GM12878 (cell line): ENCODE measurements at regions of chr6 and their contacts with region 1.

Region 1: DNA sequence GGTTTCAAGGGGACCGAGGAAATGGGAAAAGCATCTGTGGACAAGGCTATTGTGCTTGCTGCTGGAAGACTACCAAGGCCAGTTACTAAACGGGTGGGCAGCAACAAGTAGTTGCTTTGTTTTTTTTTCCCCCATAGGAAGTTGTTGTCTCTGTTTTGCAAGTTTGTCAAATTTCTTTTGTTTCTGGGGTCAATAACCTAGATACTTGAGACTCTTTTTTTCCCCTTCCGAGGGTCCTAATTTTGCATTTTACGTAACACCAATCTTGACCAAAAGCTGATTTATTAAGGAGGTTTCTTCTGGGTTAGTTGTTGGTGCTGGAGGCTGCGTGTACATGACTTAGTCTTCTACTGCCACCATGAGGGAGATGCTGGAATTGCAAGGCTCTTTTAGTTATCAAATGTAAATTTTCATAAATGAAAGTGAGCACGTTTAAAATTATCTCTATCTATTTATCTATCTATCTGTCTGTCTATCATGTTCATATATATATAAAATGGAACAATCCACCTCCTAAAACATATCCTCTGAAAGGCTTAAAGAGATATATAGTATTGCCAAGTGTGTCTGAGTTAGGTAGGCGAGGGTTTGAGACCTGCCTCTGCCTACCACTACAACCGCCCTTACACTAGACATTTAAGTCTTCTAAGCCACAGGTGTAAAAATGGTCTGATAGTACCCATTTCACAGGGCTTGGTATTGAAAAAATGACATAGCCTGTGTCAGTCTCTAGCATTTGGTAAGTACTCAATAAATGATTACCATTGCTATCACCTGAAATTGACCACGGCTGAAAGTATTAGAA is 60.2 kb downstream of the GCLC start:
- DNase-seq: no peak
- ATAC-seq: peak; percentile 65
- H3K4me3 ChIP-seq: no peak overlapping the region
- H3K27ac ChIP-seq: no peak overlapping the region
- H3K4me1 ChIP-seq: no peaks in the 10 kb centered on the region
- H3K27me3 ChIP-seq: no peaks in the 10 kb centered on the region
- CTCF ChIP-seq: peak; percentile 88 to 98 (median 96); a peak in 5 of 6 replicates
- EP300 ChIP-seq: no peak
- POLR2A ChIP-seq: no peak
- RAD21 ChIP-seq: peak; percentile 99

Region 2: DNA sequence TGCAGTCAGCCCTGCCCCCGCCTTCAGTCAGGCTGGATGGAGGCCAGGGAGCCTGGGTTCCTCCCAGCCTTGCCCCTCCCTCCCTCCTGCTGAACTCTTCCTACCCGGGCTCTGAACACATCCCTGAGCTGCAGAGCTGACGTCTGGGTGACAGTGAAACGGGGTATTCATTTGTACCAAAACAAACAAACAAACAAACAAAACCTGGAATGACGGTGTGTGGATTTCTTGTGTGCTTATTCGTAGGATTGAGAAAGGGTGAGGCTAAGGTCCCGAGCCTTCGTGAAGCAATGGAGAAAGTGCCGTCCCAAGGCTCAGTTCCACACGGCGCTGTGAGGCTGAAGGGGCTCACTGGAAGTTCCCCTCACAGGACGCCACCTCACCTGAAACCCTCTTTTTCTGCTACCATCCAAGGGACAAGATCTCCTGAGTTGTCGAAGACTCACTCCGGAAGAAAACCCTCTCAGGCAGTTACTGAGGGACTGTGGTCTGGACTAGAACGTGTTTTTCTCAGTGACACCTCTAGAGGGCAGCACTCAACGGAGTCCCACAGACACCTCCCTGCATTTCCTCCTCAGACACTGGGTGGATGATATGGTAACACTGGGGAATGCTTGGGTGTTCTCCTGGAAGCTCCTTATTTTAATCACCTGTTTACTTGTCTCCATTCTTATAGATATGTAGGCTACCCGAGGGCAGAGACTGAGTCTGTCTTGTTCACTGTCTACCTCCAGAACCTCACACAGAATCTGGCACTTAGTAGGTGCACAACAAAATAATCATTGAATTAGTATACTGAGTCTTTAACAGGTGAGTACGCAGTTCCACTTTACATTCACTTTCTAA is 602.5 kb before region 1 on chr6:
- CTCF ChIA-PET with region 1: no interaction called
- POLR2A ChIA-PET with region 1: no interaction called
- RAD21 ChIA-PET with region 1: no interaction called
- SMC1A ChIA-PET with region 1: no interaction called
- in situ Hi-C with region 1: no loop called
- intact Hi-C with region 1: loop called (anchors 10 kb)
- DNase-seq: peak; percentile 26
- ATAC-seq: peak; percentile 100
- H3K4me3 ChIP-seq: peak overlapping the region; percentile 43
- H3K27ac ChIP-seq: no peak overlapping the region
- H3K4me1 ChIP-seq: no peaks in the 10 kb centered on the region
- H3K27me3 ChIP-seq: no peaks in the 10 kb centered on the region; a peak in 1 of 4 replicates
- CTCF ChIP-seq: peak; percentile 77 to 79 (median 78)
- EP300 ChIP-seq: no peak
- POLR2A ChIP-seq: no peak
- RAD21 ChIP-seq: peak; percentile 60

Region 3: GRCh38 chr6:53151676-53152075 is 333.0 kb before region 1 on chr6:
- CTCF ChIA-PET with region 1: interaction called, 22 read pairs
- POLR2A ChIA-PET with region 1: no interaction called
- RAD21 ChIA-PET with region 1: interaction called, 12 read pairs
- SMC1A ChIA-PET with region 1: interaction called, 4 read pairs
- in situ Hi-C with region 1: no loop called
- intact Hi-C with region 1: loop called (anchors 1 kb)
- DNase-seq: no peak
- ATAC-seq: peak; percentile 96
- H3K4me3 ChIP-seq: no peak overlapping the region
- H3K27ac ChIP-seq: no peak overlapping the region
- H3K4me1 ChIP-seq: no peaks in the 10 kb centered on the region
- H3K27me3 ChIP-seq: peaks cover 0 to 2% of the 10 kb centered on the region in 2 experiments; a peak in 1 of 4 replicates
- CTCF ChIP-seq: peak; percentile 46 to 62 (median 48)
- EP300 ChIP-seq: no peak
- POLR2A ChIP-seq: no peak
- RAD21 ChIP-seq: 0 out of 2 replicates have a peak, but pooled peaks have one; percentile 35

Region 4: DNA sequence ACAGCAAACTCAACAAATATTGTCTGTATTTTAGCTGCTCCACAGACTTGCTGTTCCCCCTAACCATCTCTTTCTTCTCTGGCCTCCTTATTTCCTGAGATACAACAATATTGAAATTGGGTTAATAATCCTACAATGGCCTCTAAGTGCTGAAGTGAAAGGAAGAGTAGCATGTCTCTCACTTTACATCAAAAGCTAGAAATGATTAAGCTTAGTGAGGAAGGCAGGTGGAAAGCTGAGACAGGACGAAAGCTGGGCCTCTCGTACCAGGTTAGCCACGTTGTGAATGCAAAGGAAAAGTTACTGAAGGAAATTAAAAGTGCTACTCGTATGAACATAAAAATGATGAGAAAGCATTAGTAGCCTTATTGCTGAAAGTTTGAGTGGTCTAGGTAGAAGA is 199.8 kb before region 1 on chr6:
- CTCF ChIA-PET with region 1: interaction called, 10 read pairs
- POLR2A ChIA-PET with region 1: no interaction called
- RAD21 ChIA-PET with region 1: interaction called, 3 read pairs
- SMC1A ChIA-PET with region 1: interaction called, 10 read pairs
- in situ Hi-C with region 1: no loop called
- intact Hi-C with region 1: loop called (anchors 5 kb)
- DNase-seq: no peak
- ATAC-seq: peak; percentile 76
- H3K4me3 ChIP-seq: no peak overlapping the region
- H3K27ac ChIP-seq: no peak overlapping the region
- H3K4me1 ChIP-seq: peaks cover 28% of the 10 kb centered on the region
- H3K27me3 ChIP-seq: no peaks in the 10 kb centered on the region
- CTCF ChIP-seq: no peak
- EP300 ChIP-seq: peak in 1 of 2 experiments; percentile 33; a peak in 1 of 4 replicates
- POLR2A ChIP-seq: no peak
- RAD21 ChIP-seq: no peak

Region 5: DNA sequence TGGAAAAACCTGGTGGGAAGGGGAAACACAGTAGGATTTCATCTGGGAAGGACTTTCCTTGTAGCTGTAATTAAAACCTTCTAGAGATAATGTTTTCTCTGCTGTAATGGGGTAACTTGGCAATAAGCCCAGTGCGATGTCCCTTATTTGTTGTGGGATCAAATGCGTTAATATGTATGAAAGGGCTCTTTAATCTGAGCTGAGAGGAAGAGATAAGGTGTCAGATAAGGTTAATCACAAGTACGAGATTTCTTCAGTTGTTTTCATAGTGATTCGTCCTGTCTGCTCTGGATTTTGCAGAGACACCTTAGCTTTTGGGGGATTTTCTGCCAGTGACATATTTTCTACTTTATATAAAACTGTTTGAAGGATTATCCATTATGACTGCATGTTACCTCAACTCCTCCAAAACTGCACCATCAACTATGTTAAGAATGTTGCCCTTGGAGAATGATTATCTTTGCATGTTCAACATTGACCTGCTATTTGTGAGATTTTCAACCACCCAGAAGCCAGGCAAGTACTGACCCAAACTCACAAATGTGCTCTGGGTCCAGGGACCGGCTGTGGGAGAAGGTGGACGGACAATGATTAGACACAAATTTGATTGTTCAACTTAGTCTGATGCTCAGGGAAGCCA is 114.7 kb before region 1 on chr6:
- CTCF ChIA-PET with region 1: no interaction called
- POLR2A ChIA-PET with region 1: no interaction called
- RAD21 ChIA-PET with region 1: no interaction called
- SMC1A ChIA-PET with region 1: no interaction called
- in situ Hi-C with region 1: no loop called
- intact Hi-C with region 1: no loop called
- DNase-seq: no peak
- ATAC-seq: no peak
- H3K4me3 ChIP-seq: no peak overlapping the region
- H3K27ac ChIP-seq: no peak overlapping the region
- H3K4me1 ChIP-seq: no peaks in the 10 kb centered on the region
- H3K27me3 ChIP-seq: no peaks in the 10 kb centered on the region
- CTCF ChIP-seq: no peak
- EP300 ChIP-seq: no peak
- POLR2A ChIP-seq: no peak
- RAD21 ChIP-seq: no peak

Region 6: DNA sequence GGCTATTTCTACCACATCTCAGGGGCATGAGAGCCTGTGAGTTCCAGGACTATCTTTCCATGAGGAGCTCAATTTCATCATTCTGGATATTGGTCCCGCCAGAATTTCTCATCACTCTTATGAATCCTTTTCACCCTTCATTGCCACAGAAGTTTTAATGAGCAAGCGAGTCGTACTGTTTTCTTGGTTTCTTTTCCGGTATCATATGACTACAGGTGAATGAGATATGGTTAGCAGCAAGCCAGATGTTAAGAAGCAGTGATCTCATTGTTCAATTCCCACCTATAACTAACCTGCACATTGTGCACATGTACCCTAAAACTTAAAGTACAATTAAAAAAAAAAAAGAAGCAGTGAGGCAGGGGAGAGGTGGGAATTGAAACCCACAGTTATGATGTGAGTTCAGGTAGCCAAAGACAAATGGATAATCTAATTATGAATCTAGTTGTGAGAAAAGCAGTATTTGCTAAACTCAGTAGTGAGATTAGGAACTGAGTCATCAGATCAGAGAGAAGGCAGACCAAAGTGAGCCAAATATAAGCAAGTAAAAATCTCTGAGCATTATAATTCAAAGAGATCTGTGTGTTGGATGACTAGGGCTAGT is 57.9 kb before region 1 on chr6:
- CTCF ChIA-PET with region 1: interaction called, 164 read pairs
- POLR2A ChIA-PET with region 1: interaction called, 4 read pairs
- RAD21 ChIA-PET with region 1: interaction called, 8 read pairs
- SMC1A ChIA-PET with region 1: interaction called, 42 read pairs
- in situ Hi-C with region 1: no loop called
- intact Hi-C with region 1: no loop called
- DNase-seq: peak; percentile 74
- ATAC-seq: peak; percentile 90
- H3K4me3 ChIP-seq: no peak overlapping the region
- H3K27ac ChIP-seq: no peak overlapping the region
- H3K4me1 ChIP-seq: peaks cover 4% of the 10 kb centered on the region; the same call in 1 of the 2 replicates
- H3K27me3 ChIP-seq: 0 out of 4 replicates have a peak, but pooled peaks cover 0 to 7% of the 10 kb centered on the region in 2 experiments
- CTCF ChIP-seq: no peak
- EP300 ChIP-seq: peak; percentile 65 to 90; a peak in 3 of 4 replicates
- POLR2A ChIP-seq: no peak
- RAD21 ChIP-seq: no peak

Region 7: DNA sequence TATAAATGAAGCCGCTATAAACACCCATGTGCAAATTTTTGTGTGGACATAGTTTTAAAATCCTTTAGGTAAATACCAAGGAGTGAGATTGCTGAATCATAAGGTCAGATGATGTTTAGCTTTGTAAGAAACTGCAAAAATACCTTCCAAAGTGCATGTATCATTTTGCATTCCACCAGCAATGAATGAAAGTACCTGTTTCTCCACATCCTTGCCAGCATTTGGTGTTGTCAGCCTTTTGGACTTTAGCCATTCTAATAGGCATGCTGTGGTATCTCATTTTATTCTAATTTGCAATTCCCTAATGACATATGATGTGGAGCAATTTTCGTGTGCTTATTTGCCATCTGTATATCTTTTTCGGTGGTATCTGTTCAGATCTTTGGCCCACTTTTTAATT is 33.5 kb before region 1 on chr6:
- CTCF ChIA-PET with region 1: interaction called, 30 read pairs
- POLR2A ChIA-PET with region 1: no interaction called
- RAD21 ChIA-PET with region 1: interaction called, 24 read pairs
- SMC1A ChIA-PET with region 1: interaction called, 194 read pairs
- in situ Hi-C with region 1: no loop called
- intact Hi-C with region 1: no loop called
- DNase-seq: no peak
- ATAC-seq: no peak
- H3K4me3 ChIP-seq: no peak overlapping the region
- H3K27ac ChIP-seq: no peak overlapping the region
- H3K4me1 ChIP-seq: no peaks in the 10 kb centered on the region
- H3K27me3 ChIP-seq: 0 out of 4 replicates have a peak, but pooled peaks cover 0 to 4% of the 10 kb centered on the region in 2 experiments
- CTCF ChIP-seq: no peak
- EP300 ChIP-seq: no peak
- POLR2A ChIP-seq: no peak
- RAD21 ChIP-seq: no peak

Region 8: GRCh38 chr6:53725791-53726431 is 241.2 kb after region 1 on chr6:
- CTCF ChIA-PET with region 1: interaction called, 10 read pairs
- POLR2A ChIA-PET with region 1: no interaction called
- RAD21 ChIA-PET with region 1: interaction called, 4 read pairs
- SMC1A ChIA-PET with region 1: interaction called, 9 read pairs
- in situ Hi-C with region 1: no loop called
- intact Hi-C with region 1: no loop called
- DNase-seq: no peak
- ATAC-seq: peak; percentile 96
- H3K4me3 ChIP-seq: no peak overlapping the region
- H3K27ac ChIP-seq: no peak overlapping the region
- H3K4me1 ChIP-seq: no peaks in the 10 kb centered on the region
- H3K27me3 ChIP-seq: no peaks in the 10 kb centered on the region; a peak in 1 of 4 replicates
- CTCF ChIP-seq: peak; percentile 93 to 97 (median 95)
- EP300 ChIP-seq: no peak
- POLR2A ChIP-seq: no peak
- RAD21 ChIP-seq: peak; percentile 81